GM10248 (cell line): ENCODE measurements at regions of chr9 and their contacts with region 1.

Region 1: DNA sequence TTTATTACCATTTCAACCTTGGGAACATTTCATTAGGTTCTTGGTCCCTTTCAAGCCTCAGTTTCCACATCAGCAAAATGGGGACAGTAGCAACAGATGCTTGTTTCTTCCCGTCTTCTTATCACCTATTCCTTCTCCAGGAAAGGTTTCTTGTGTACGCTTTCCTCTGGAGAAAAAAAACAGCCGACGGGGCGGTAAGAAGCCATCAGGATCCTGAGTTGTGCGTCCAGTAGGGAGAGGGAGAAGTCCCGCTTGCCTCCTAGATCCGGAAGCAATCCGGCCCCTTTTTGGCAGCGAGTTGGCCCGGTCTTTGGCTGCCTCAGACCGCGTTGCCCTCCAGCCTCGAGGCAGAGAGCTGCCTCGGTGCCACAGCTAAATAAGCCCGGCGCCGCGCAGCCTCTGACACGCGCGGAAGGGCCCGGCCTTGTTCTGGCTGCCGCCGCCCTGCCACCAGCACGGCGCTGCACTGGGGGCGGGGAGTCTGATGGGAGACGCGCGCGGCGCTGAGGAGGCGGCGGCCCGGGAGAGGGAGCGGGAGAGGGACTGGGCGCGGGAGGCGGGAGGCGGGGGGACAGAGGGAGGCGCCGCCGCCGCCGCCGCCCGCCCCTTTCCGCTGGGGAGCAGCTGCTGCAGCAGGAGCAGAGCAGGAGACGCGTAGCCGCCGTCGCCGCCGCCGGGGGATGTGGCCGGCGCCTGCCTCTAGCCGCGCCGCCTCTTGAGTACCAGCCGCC is at the start of gene SLC44A1:
- DNase-seq: peak; percentile 82
- CTCF ChIP-seq: no peak

Region 2: DNA sequence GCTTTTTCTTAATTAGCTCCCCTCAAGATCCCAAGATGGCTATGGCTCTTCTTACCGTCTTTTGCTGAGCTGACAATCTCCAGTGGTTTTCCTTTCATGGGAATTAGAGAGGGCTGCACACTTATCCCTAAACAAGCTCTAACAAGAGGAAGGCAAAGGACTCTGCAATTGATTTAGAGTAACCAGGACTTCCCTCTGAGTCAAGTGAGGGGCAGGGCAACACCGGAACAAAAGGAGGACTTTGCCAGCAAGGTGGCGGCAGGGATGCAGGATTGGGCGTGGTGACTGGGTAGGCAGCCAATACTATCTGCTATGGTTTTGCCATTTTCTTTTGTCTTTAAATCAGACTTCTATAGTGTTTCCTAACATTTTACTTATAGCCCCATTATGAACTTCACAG is 10.1 kb after region 1 on chr9:
- CTCF ChIA-PET with region 1: interaction called, 11 read pairs
- POLR2A ChIA-PET with region 1: interaction called, 4 read pairs
- DNase-seq: no peak
- CTCF ChIP-seq: no peak

Region 3: GRCh38 chr9:105281926-105282325 is 37.8 kb after region 1 on chr9:
- CTCF ChIA-PET with region 1: no interaction called
- POLR2A ChIA-PET with region 1: no interaction called
- DNase-seq: no peak
- CTCF ChIP-seq: no peak